Heart right ventricle (tissue), 16 donors: ENCODE measurements at regions of chr19 and their contacts with region 1.

Region 1: DNA sequence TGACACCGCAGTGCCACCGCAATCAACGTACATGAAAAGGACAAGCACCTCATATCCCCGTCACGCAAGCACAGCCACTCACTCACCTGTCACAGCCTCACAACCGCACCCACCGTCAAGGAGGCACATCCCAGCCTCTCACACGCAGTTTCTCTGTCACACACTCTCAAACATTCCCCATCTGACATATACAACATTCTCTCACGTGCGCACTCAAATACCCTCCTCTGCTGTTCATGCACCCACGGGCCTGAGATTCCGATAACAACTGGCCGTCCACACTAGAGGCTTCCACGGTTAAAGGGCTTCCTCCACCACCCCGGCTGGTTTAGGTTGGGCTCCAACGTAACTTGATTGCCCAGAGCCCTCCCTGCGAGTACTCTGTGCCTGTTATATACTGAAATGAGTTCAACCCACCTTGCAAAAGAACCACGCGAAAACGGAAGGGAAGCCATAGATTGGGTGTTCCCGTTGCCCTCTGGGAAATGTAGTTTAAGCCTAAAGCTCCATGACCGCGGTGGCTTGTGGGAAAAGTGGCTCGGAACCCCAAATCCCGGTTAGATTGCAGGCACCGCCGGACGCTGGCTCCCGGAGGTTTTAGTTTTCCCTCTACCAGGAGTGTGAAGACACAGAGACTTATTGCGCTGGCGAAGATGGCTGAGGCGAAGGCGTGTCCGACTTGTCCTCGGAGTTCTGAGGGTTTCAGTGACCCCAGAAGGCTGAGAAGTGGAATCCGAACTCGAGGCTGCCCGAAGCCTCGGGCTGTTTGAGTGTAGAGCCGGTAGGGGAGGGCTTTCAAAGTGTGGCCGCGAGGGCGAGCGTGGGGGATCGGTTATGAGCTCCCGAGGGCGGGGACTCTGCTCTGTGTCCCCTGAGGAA is at the start of gene ZNF573:
- DNase-seq: peak; percentile 80 to 91
- ATAC-seq: peak; percentile 96 to 99 (median 98)
- H3K4me3 ChIP-seq: peak within 1 kb of the TSS; percentile 52 to 99 (median 78)
- H3K27ac ChIP-seq: peak within 1 kb of the TSS; percentile 79 to 92 (median 90)
- H3K4me1 ChIP-seq: peaks cover 2 to 19% (median 14%) of the 10 kb centered on the region in 9 donors
- H3K27me3 ChIP-seq: no peaks in the 10 kb centered on the region
- CTCF ChIP-seq: peak in 5 of 9 donors; percentile 8 to 37 (median 29)
- total RNA-seq, gene ZNF573: 6.9 to 14.1 (median 10.4) TPM

Region 2: GRCh38 chr19:37817180-37817981 is 38.0 kb after region 1 on chr19:
- intact Hi-C with region 1: loop called in 1 of 10 experiments (anchors 5 kb)
- DNase-seq: peak; percentile 89
- ATAC-seq: peak; percentile 91 to 98 (median 96)
- H3K4me3 ChIP-seq: peak overlapping the region; percentile 51 to 93 (median 80)
- H3K27ac ChIP-seq: peak overlapping the region in 9 of 10 donors; percentile 17 to 68 (median 60)
- H3K4me1 ChIP-seq: peaks cover 0 to 14% (median 6%) of the 10 kb centered on the region in 9 donors
- H3K27me3 ChIP-seq: no peaks in the 10 kb centered on the region
- CTCF ChIP-seq: no peak

Region 3: DNA sequence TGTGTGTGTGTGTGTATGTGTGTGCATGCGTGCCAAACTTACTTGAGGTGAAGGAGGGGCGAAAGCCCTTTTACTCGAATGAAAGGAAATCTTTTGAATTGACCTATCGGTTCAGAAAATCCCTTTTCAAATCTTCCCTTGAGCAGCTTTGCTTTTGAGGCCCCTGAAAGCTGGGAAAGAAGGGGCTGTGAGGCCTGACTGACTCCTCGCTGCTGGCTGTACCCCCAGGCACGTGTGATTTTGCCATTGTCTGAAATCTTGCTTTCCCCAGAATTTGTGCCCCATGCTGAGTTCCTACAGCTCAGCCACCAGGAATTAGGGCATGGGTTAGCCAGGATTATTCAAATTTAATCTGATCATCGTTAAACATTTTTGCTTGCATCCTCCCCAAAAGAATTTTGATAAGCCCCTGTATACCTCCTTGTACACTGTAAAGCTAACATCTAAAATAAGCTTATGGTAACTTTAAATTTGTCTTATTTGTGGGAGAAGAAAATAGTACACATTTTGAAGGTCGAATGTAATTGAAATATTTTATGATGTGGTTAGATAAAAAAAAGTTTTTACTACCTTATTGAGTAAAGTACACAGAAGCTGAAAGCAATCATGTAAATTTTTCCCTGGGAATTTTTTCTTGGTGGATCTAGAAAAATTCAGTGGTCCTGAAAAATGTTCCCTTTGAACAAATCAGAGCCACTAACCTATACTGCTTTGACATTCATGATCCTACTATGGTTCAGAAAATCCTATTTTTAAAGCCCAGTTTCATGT is 174.4 kb after region 1 on chr19:
- intact Hi-C with region 1: no loop called
- DNase-seq: no peak
- ATAC-seq: no peak
- H3K4me3 ChIP-seq: no peak overlapping the region
- H3K27ac ChIP-seq: no peak overlapping the region
- H3K4me1 ChIP-seq: peaks cover 0 to 9% (median 0%) of the 10 kb centered on the region in 9 donors
- H3K27me3 ChIP-seq: no peaks in the 10 kb centered on the region
- CTCF ChIP-seq: no peak